Breast epithelium (tissue), 4 donors: ENCODE measurements at regions of chr7 and their contacts with region 1.

Region 1: DNA sequence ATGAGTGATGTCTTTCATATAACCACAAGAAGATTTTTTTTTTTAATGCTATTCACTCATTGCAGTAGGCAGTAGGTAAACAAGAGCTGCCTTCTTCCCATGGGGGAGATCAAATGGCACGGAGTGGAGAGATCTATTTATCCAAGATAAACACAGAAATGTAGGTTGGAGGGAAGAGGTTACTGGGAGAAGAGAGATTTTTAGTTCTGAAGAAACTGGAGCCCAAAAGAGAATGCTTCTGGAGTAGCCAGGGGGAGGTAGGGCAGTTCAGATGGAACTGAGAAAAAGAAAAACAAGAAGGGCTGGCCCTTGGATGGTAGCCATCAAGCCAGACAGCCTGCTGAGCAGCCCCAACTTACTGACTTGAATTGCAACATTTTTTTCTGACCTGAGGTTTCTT is 270.1 kb upstream of the TPK1 start:
- DNase-seq: no peak
- H3K4me3 ChIP-seq: no peak overlapping the region
- H3K27ac ChIP-seq: no peak overlapping the region
- H3K4me1 ChIP-seq: no peaks in the 10 kb centered on the region
- H3K27me3 ChIP-seq: no peaks in the 10 kb centered on the region
- CTCF ChIP-seq: no peak
- POLR2A ChIP-seq: no peak

Region 2: GRCh38 chr7:145065473-145065872 is 40.5 kb before region 1 on chr7:
- intact Hi-C with region 1: no loop called
- DNase-seq: no peak
- H3K4me3 ChIP-seq: no peak overlapping the region
- H3K27ac ChIP-seq: no peak overlapping the region
- H3K4me1 ChIP-seq: no peaks in the 10 kb centered on the region
- H3K27me3 ChIP-seq: no peaks in the 10 kb centered on the region
- CTCF ChIP-seq: no peak
- POLR2A ChIP-seq: no peak

Region 3: GRCh38 chr7:145123502-145123901 is 17.5 kb after region 1 on chr7:
- intact Hi-C with region 1: loop called (anchors 1 kb)
- DNase-seq: no peak
- H3K4me3 ChIP-seq: no peak overlapping the region
- H3K27ac ChIP-seq: no peak overlapping the region
- H3K4me1 ChIP-seq: no peaks in the 10 kb centered on the region
- H3K27me3 ChIP-seq: no peaks in the 10 kb centered on the region
- CTCF ChIP-seq: no peak
- POLR2A ChIP-seq: no peak

Region 4: DNA sequence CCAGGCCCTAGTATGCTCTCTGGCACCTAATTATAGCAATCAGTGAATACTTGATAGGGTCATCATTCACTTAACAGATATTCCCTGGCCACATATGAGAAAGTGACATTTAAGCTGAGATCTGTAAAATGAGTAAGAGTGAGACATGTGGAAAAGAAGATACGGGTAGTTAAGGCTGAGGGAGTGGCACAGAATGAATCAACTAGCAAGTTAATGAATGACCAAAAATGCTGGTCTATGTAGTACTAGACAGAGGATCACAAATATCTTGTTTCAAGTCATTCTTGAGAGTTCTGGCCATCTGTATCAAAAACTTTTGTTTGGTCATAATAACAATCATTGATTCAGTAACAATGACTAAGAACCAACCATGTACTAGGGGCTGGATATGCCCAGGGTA is 1965.5 kb after region 1 on chr7:
- intact Hi-C with region 1: no loop called
- DNase-seq: no peak
- H3K4me3 ChIP-seq: no peak overlapping the region
- H3K27ac ChIP-seq: no peak overlapping the region
- H3K4me1 ChIP-seq: no peaks in the 10 kb centered on the region
- H3K27me3 ChIP-seq: no peaks in the 10 kb centered on the region
- CTCF ChIP-seq: no peak
- POLR2A ChIP-seq: no peak